ENCODE measurements at regions of chr9 and their contacts with region 1.

Region 1: GRCh38 chr9:81141961-81142360 is 547.4 kb downstream of the TLE1 start:
- DNase-seq: no peak
- H3K4me3 ChIP-seq: no peak overlapping the region
- H3K27ac ChIP-seq: no peak overlapping the region
- H3K4me1 ChIP-seq: no peaks in the 10 kb centered on the region
- H3K27me3 ChIP-seq: no peaks in the 10 kb centered on the region
- CTCF ChIP-seq: no peak
- POLR2A ChIP-seq: no peak

Region 2: DNA sequence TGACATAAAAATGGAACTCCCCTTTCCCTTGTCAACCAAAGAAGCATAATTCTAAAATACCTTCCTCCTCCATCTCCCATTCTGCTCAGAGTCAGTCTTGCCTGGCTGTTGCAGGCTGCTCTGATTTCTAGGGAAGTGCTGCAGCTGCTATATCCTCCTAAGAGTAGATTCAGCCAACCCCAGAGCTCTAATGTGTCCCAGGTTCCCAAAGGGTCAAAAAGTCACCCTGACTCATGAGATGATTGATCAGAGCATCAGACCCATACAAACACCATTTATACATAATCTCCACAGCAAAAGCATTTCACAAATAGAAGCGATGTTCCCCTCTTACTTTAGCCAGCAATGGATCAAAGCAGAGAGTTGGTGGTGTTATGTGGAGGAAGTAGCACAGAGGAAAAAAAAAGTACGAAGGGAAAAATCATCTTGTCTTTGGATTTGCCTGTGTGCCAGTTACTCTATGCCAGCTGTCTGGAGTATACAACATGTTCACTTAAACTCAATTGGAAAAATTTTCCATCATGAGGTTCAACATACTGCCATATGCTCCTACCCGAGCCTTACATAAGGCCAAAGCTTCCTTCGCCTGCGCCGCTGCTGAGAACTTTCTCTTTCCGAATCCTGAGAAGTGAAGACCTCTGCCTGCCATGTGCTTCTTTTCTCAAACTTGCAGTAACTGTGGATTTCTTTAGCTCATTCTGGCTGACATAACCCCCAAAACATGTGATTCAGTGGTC is 1312.2 kb before region 1 on chr9:
- intact Hi-C with region 1: no loop called
- DNase-seq: no peak
- H3K4me3 ChIP-seq: no peak overlapping the region
- H3K27ac ChIP-seq: no peak overlapping the region
- H3K4me1 ChIP-seq: no peaks in the 10 kb centered on the region
- H3K27me3 ChIP-seq: no peaks in the 10 kb centered on the region
- CTCF ChIP-seq: no peak
- POLR2A ChIP-seq: no peak

Region 3: GRCh38 chr9:80175286-80176150 is 966.4 kb before region 1 on chr9:
- intact Hi-C with region 1: loop called (anchors 5 kb)
- DNase-seq: no peak
- H3K4me3 ChIP-seq: no peak overlapping the region
- H3K27ac ChIP-seq: no peak overlapping the region
- H3K4me1 ChIP-seq: no peaks in the 10 kb centered on the region
- H3K27me3 ChIP-seq: no peaks in the 10 kb centered on the region
- CTCF ChIP-seq: peak; percentile 48 to 65 (median 64)
- POLR2A ChIP-seq: no peak

Measured in breast epithelium (tissue), 4 donors.